CD4-positive, alpha-beta T cell (primary cell): ENCODE measurements at regions of chr6 and their contacts with region 1.

Region 1: DNA sequence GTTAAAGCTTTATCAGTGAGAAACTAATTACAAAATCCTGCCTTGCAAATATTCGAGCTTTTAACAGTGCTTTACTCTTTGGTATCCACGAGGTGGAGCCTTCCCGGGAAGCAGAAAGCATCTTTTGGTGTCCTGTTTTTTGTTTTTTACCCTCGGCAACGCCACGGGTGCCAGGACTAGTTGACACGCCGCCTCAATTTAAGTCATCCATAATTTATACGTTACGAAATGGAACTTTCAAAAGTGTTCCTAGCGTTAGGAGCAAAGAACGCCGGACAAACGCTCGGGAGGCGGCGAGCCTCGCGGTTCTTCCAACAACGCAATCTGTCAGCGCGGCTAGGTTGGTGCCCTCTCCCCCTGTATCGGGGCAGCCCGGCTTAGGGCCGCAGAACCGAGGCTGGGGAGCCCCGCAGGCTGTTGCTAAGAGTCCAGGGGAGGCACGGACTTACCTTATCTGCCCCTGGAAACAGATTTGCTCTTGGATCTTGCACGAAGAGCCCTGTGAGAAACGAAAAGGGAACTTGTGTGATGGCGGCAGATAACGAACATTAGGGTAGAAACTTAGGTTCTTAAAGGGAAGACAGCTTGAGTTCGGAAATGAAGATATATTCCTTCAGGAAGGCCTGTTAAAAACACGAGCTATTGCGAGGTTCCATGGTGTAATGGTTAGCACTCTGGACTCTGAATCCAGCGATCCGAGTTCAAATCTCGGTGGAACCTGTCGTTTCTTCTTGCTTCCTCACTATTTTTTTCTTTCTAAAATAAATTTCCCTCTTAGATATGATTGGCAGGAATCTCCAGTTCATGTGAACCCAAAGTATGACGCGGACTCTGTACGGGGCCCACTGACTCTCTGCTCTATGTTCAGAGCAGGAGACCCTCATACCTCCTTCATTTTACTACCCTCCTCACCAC is 46.2 kb upstream of the ZNF184 start:
- DNase-seq: peak; percentile 33 to 89 (median 54)
- ATAC-seq: peak; percentile 84
- H3K4me3 ChIP-seq: peak overlapping the region; percentile 92
- H3K4me3 Mint-ChIP-seq: peak overlapping the region; percentile 91
- H3K27ac ChIP-seq: peak overlapping the region; percentile 17 to 76
- H3K27ac Mint-ChIP-seq: peak overlapping the region; percentile 89
- H3K4me1 ChIP-seq: peaks cover 12% of the 10 kb centered on the region
- H3K4me1 Mint-ChIP-seq: peaks cover 31% of the 10 kb centered on the region
- H3K27me3 ChIP-seq: peaks cover 7% of the 10 kb centered on the region in 2 experiments
- H3K27me3 Mint-ChIP-seq: peaks cover 28% of the 10 kb centered on the region
- CTCF ChIP-seq: peak; percentile 78

Region 2: GRCh38 chr6:26375270-26375669 is 1143.9 kb before region 1 on chr6:
- CTCF ChIA-PET with region 1: no interaction called
- POLR2A ChIA-PET with region 1: no interaction called
- intact Hi-C with region 1: no loop called
- DNase-seq: peak in 1 of 14 experiments; percentile 25
- ATAC-seq: no peak
- H3K4me3 ChIP-seq: no peak overlapping the region
- H3K4me3 Mint-ChIP-seq: no peak overlapping the region
- H3K27ac ChIP-seq: peak overlapping the region; percentile 16 to 52
- H3K27ac Mint-ChIP-seq: peak overlapping the region; percentile 80
- H3K4me1 ChIP-seq: peaks cover 16% of the 10 kb centered on the region
- H3K4me1 Mint-ChIP-seq: peaks cover 44% of the 10 kb centered on the region
- H3K27me3 ChIP-seq: no peaks in the 10 kb centered on the region
- H3K27me3 Mint-ChIP-seq: no peaks in the 10 kb centered on the region
- CTCF ChIP-seq: no peak

Region 3: GRCh38 chr6:26457806-26458688 is 1061.1 kb before region 1 on chr6 and contains the start of gene BTN2A1:
- CTCF ChIA-PET with region 1: no interaction called
- POLR2A ChIA-PET with region 1: no interaction called
- intact Hi-C with region 1: no loop called
- DNase-seq: peak; percentile 30 to 91 (median 52)
- ATAC-seq: peak; percentile 97
- H3K4me3 ChIP-seq: peak within 1 kb of the TSS; percentile 91
- H3K4me3 Mint-ChIP-seq: peak within 1 kb of the TSS; percentile 98
- H3K27ac ChIP-seq: peak within 1 kb of the TSS; percentile 73 to 91
- H3K27ac Mint-ChIP-seq: peak within 1 kb of the TSS; percentile 92
- H3K4me1 ChIP-seq: peaks cover 44% of the 10 kb centered on the region
- H3K4me1 Mint-ChIP-seq: peaks cover 64% of the 10 kb centered on the region
- H3K27me3 ChIP-seq: no peaks in the 10 kb centered on the region
- H3K27me3 Mint-ChIP-seq: no peaks in the 10 kb centered on the region
- CTCF ChIP-seq: no peak
- total RNA-seq, gene BTN2A1: 16.2 to 17.5 TPM

Region 4: DNA sequence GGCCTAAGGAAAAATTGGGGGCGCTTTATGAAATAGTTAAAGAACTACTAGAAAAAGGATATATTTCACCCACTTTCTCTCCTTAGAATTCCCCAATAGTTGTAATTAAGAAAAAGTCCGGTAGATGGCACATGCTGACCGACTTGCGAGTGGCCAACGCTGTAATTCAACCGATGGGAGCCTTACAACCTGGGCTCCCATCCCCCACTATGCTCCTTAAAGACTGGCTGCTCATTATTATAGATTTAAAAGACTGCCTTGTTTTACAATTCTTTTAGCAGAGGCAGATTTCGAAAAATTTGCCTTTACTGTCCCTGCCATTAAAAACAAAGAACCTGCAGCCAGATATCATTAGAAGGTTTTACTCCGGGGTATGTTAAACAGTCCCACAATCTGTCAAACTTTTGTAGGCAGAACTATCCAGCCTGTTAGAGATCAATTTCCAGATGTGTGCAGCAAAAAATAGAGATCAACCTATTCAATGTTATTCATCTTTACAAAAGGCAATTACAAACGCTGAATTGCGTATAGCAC is 330.2 kb before region 1 on chr6:
- CTCF ChIA-PET with region 1: no interaction called
- POLR2A ChIA-PET with region 1: interaction called, 3 read pairs
- intact Hi-C with region 1: loop called in 1 of 2 experiments (anchors 5 kb)
- DNase-seq: peak in 9 of 14 experiments; percentile 28 to 86 (median 39)
- ATAC-seq: peak; percentile 85
- H3K4me3 ChIP-seq: peak overlapping the region; percentile 66
- H3K4me3 Mint-ChIP-seq: peak overlapping the region; percentile 88
- H3K27ac ChIP-seq: no peak overlapping the region
- H3K27ac Mint-ChIP-seq: peak overlapping the region; percentile 3
- H3K4me1 ChIP-seq: peaks cover 18% of the 10 kb centered on the region
- H3K4me1 Mint-ChIP-seq: peaks cover 13% of the 10 kb centered on the region
- H3K27me3 ChIP-seq: no peaks in the 10 kb centered on the region
- H3K27me3 Mint-ChIP-seq: peaks cover 9% of the 10 kb centered on the region
- CTCF ChIP-seq: peak; percentile 85

Region 5: DNA sequence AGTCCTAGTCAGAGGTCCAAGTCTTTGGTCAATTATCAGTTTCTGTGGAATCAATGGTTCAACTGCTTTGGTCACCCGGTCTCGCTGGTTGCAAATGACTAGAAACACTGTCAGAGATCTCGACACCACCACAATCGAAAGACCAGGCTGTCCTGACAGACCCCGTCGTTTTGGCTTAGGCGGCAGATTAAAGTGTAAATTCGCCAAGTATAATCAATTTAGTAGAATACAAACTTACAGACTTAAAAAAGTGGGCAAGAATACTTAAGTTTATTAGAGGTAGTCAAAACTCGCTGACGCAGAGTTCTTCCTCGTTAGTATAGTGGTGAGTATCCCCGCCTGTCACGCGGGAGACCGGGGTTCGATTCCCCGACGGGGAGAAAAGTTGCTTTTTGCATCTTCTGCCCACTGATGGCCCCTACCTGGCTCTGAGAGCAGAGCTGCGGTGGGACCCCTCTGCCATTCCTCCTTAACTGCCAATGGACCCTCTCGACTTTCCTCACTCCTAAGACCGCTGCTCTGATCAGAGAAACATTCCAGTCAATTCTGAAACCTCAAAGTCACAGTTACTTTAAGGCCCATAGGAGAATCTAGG is 15.6 kb before region 1 on chr6:
- CTCF ChIA-PET with region 1: interaction called, 27 read pairs
- POLR2A ChIA-PET with region 1: interaction called, 15 read pairs
- intact Hi-C with region 1: loop called in 1 of 2 experiments (anchors 1 kb)
- DNase-seq: peak; percentile 59 to 89 (median 75)
- ATAC-seq: peak; percentile 58
- H3K4me3 ChIP-seq: peak overlapping the region; percentile 62
- H3K4me3 Mint-ChIP-seq: peak overlapping the region; percentile 95
- H3K27ac ChIP-seq: peak overlapping the region; percentile 2 to 33
- H3K27ac Mint-ChIP-seq: peak overlapping the region; percentile 94
- H3K4me1 ChIP-seq: peaks cover 15% of the 10 kb centered on the region
- H3K4me1 Mint-ChIP-seq: peaks cover 46% of the 10 kb centered on the region
- H3K27me3 ChIP-seq: peaks cover 0 to 11% of the 10 kb centered on the region in 2 experiments
- H3K27me3 Mint-ChIP-seq: peaks cover 40% of the 10 kb centered on the region
- CTCF ChIP-seq: no peak

Region 6: GRCh38 chr6:27565821-27566766 is 47.0 kb after region 1 on chr6:
- CTCF ChIA-PET with region 1: no interaction called
- POLR2A ChIA-PET with region 1: no interaction called
- intact Hi-C with region 1: no loop called
- DNase-seq: no peak
- ATAC-seq: no peak
- H3K4me3 ChIP-seq: no peak overlapping the region
- H3K4me3 Mint-ChIP-seq: no peak overlapping the region
- H3K27ac ChIP-seq: no peak overlapping the region
- H3K27ac Mint-ChIP-seq: no peak overlapping the region
- H3K4me1 ChIP-seq: peaks cover 8% of the 10 kb centered on the region
- H3K4me1 Mint-ChIP-seq: peaks cover 12% of the 10 kb centered on the region
- H3K27me3 ChIP-seq: peaks cover 67 to 72% of the 10 kb centered on the region in 2 experiments
- H3K27me3 Mint-ChIP-seq: peaks cover 83% of the 10 kb centered on the region
- CTCF ChIP-seq: no peak

Region 7: DNA sequence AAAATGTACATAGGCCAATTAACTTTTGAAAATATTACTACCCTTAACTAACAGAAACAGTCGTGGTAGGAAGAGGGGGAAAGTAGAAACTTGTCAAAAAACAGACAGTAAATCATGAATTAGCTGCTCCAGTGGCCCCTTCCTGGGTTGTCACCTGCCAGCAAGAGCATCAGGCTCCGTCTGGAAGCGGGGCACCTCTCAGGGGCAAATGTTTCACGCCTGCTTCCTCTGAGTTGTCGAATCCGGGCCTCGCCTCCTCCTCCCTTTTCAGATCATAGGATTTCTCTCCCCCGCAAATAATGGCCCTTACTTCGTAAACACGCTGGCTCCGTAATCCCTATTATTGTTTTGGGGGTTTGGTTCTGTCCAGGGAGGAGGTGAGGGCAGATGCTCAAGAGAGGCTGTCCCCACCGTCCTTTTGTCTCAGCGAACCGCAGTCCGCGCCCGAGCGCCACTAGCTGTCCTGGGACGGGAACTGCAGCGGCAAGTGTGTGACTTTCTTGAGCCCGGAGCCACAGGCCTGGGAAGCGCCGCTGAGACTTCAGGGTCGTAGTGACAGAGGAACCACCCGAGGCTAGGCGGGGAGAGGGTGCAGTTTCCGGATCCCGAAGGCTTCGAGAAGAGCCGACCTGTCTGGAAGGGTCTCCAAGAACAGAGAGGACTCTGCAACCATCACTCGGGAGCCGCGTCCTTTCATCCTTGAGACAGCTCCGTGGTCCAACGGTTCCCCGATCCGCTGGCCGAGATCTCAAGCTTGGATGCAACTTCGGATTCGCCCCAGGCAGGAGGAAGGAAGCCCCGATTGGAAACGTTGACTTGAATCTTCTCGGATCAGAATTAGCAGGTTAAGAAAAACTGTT is 168.2 kb after region 1 on chr6:
- CTCF ChIA-PET with region 1: interaction called, 5 read pairs
- POLR2A ChIA-PET with region 1: no interaction called
- intact Hi-C with region 1: loop called (anchors 5 kb)
- DNase-seq: peak; percentile 53 to 87 (median 68)
- ATAC-seq: peak; percentile 74
- H3K4me3 ChIP-seq: peak overlapping the region; percentile 88
- H3K4me3 Mint-ChIP-seq: peak overlapping the region; percentile 95
- H3K27ac ChIP-seq: peak overlapping the region in 1 of 2 donors; percentile 37
- H3K27ac Mint-ChIP-seq: peak overlapping the region; percentile 97
- H3K4me1 ChIP-seq: peaks cover 14% of the 10 kb centered on the region
- H3K4me1 Mint-ChIP-seq: peaks cover 38% of the 10 kb centered on the region
- H3K27me3 ChIP-seq: peaks cover 5 to 9% of the 10 kb centered on the region in 2 experiments
- H3K27me3 Mint-ChIP-seq: peaks cover 40% of the 10 kb centered on the region
- CTCF ChIP-seq: peak; percentile 66